Psoas muscle (tissue), 8 donors: ENCODE measurements at regions of chr14 and their contacts with region 1.

Region 1: GRCh38 chr14:75732888-75733287 is 71.8 kb downstream of the TTLL5 start:
- DNase-seq: no peak
- ATAC-seq: no peak
- H3K4me3 ChIP-seq: no peak overlapping the region
- H3K27ac ChIP-seq: no peak overlapping the region
- H3K4me1 ChIP-seq: no peaks in the 10 kb centered on the region
- H3K27me3 ChIP-seq: no peaks in the 10 kb centered on the region
- CTCF ChIP-seq: no peak

Region 2: DNA sequence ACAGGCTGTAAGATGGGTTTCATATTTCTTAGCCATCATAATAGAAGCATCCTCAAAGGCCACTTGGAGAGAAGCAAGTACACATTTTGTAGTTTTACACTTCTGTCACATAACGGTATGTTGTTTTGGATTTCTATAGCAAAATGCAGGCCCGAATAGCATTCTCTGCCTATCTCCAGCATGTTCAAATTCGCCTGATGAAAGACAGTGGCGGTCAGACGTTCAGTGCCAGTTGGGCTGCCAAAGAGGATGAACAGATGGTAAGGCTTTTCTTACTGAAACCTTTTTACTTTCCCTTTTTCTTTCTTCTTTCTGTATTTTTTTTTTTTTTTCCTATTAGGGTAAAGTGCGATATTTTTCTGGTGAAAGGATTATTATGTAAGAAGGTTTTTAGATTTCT is 38.7 kb after region 1 on chr14:
- intact Hi-C with region 1: loop called in 1 of 2 experiments (anchors 5 kb)
- DNase-seq: no peak
- ATAC-seq: no peak
- H3K4me3 ChIP-seq: no peak overlapping the region
- H3K27ac ChIP-seq: no peak overlapping the region
- H3K4me1 ChIP-seq: peaks cover 23% of the 10 kb centered on the region
- H3K27me3 ChIP-seq: no peaks in the 10 kb centered on the region
- CTCF ChIP-seq: no peak

Region 3: GRCh38 chr14:75995372-75996041 is 262.6 kb after region 1 on chr14:
- intact Hi-C with region 1: no loop called
- DNase-seq: peak; percentile 75 to 83
- ATAC-seq: peak; percentile 77 to 84 (median 81)
- H3K4me3 ChIP-seq: peak overlapping the region; percentile 35
- H3K27ac ChIP-seq: peak overlapping the region; percentile 64
- H3K4me1 ChIP-seq: peaks cover 39% of the 10 kb centered on the region
- H3K27me3 ChIP-seq: no peaks in the 10 kb centered on the region
- CTCF ChIP-seq: no peak